ENCODE measurements at regions of chr6 and their contacts with region 1.

Region 1: DNA sequence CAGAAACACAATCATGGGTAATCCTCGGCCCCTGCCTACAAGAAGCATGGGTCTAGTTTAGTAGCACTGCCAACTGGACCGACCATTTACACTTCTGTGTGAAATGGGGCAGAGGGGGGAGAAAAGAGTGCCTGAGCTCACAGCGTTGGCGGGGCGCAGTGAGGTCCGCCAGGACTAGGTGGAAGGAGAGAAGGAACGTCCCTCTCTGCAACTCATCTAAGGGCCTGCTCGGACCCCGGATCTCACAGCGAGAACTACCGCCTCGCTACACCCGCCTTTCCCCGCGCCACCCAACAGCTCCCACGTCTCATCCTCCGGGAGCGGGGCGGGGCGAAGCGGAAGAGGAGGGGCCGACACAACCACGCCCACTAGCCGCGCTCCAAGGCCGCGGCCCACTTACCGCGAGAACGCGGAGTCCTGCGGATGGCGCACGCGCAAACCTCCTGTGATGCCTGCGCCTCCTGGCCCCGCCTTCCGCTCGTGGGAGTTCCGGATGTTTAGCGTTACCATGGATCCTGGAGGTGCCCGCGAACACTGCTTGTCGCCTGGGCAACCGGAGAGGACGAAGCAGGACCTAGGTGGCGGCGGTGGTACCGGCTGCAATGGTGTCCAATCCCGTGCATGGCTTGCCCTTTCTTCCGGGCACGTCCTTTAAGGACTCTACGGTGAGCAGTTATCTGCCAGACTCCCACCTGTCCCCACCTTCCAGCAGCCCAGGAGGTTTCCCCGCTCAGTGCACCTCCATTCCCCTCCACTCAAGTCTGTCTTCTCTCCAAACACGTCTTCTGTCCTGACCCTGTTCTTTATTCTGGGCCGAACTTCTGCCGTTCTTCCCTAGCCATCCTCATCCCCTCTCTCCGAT is at the start of gene EFHC1:
- DNase-seq: peak; percentile 99
- ATAC-seq: peak; percentile 99
- H3K4me3 ChIP-seq: peak within 1 kb of the TSS; percentile 27
- H3K4me1 ChIP-seq: no peaks in the 10 kb centered on the region
- CTCF ChIP-seq: no peak
- total RNA-seq, gene EFHC1: 10.8 to 22.2 (median 20.5) TPM

Region 2: GRCh38 chr6:52577022-52577777 is 157.2 kb after region 1 on chr6 and contains the start of gene TRAM2:
- intact Hi-C with region 1: loop called in 1 of 2 experiments (anchors 10 kb)
- DNase-seq: peak; percentile 89 to 92 (median 92)
- ATAC-seq: peak; percentile 92
- H3K4me3 ChIP-seq: peak within 1 kb of the TSS; percentile 63
- H3K4me1 ChIP-seq: peaks cover 22% of the 10 kb centered on the region
- CTCF ChIP-seq: no peak
- total RNA-seq, gene TRAM2: 20.3 to 25.0 (median 24.1) TPM

Region 3: GRCh38 chr6:52598123-52598823 is 178.2 kb after region 1 on chr6:
- intact Hi-C with region 1: loop called (anchors 5 kb)
- DNase-seq: peak in 2 of 3 donors; percentile 46 to 59
- ATAC-seq: peak; percentile 59
- H3K4me3 ChIP-seq: no peak overlapping the region
- H3K4me1 ChIP-seq: peaks cover 8% of the 10 kb centered on the region
- CTCF ChIP-seq: peak; percentile 15

Region 4: GRCh38 chr6:52664186-52664990 is 244.3 kb after region 1 on chr6:
- intact Hi-C with region 1: loop called (anchors 2 to 5 kb)
- DNase-seq: peak; percentile 91 to 94 (median 92)
- ATAC-seq: peak; percentile 98
- H3K4me3 ChIP-seq: peak overlapping the region; percentile 56
- H3K4me1 ChIP-seq: peaks cover 7% of the 10 kb centered on the region
- CTCF ChIP-seq: no peak

Region 5: GRCh38 chr6:52975580-52975979 is 555.5 kb after region 1 on chr6:
- intact Hi-C with region 1: no loop called
- DNase-seq: no peak
- ATAC-seq: no peak
- H3K4me3 ChIP-seq: no peak overlapping the region
- H3K4me1 ChIP-seq: peaks cover 5% of the 10 kb centered on the region
- CTCF ChIP-seq: no peak

Measured in mucosa of descending colon (tissue), 3 donors.